ENCODE measurements at regions of chr4 and their contacts with region 1.

Region 1: DNA sequence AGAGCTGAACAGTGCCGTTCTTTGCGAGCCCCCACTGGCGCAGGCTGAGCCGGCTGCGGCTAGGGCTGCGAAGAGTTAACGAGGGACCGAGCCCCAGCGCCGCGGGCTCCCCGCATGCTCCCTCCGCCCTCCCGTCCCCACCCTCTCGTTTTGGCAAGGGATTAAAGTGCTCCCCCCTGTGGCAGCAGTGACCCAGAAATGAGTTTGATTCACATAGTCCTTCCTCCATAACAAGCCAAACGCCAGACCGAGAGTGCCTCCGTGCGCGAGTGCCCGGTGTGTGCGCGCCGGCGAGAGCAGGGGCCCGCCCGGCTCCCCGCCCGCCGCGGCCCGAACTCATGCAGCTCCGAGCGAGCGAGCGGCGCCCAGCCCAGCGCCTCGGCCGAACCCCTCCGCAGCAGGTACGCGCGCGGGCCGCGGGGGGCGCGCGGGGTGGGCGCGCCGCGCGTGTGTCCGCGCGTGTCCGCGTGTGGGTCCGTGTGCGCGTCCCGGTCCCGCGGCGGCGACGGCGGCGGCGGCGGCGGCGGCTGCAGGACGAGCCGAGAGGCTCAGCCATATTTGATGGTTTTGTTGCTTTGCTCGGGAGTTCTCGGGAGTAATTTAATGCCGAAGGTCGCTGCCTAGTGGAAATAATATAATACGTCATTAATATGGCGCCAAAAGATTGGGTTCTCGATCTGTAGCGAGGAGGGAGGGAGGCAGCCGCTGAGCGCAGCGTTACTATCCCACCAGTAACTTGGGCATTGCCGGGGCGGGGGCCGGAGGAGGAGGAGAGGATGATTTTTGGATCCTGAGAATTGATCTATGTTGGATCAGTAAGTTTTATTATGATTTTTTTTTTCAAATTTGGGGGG is at the start of gene JADE1:
- DNase-seq: peak; percentile 86
- H3K4me3 Mint-ChIP-seq: peak within 1 kb of the TSS; percentile 96
- H3K27ac Mint-ChIP-seq: peak within 1 kb of the TSS; percentile 99
- H3K4me1 Mint-ChIP-seq: peaks cover 10% of the 10 kb centered on the region
- H3K27me3 Mint-ChIP-seq: no peaks in the 10 kb centered on the region
- total RNA-seq, gene JADE1: 33.6 and 37.8 TPM in 2 replicates

Region 2: DNA sequence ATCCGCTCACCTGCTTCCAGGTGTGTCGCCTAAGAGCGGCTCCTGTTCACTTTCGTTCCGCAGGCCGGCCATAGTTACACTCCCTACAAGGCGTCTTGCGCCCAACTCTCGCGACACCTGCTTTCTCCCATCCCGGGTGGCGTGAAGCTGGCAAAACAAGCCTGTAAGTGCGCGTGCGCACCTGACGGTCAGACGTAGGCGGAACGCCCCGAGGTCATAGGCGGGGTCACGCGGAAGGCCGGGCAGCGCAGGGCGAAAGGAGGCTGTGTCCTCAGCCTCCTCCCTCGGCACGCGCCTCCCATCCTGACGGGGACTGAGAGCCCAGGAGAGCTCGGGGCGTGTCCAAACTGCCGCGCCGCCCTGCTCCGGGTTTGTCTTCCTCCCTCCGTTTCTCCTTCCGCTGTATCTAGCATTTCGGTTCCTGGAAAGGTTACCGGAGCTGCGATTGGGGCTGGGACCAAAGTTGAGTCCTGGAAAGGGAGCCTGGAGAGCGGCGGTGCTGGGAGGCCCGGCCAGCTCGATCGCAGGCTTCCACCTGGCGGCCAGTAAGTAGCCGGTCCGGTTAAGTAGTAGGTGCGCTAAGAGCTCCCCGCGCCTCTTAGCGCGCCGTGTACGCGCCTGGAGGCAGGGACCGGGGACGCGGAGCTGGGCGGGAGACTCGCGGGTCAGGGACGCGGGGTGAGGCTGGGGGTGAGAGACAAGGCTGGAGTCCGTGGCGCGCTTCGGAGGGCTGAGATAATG is 844.5 kb before region 1 on chr4 and contains the starts of genes ABHD18 and MFSD8:
- intact Hi-C with region 1: loop called (anchors 1 kb)
- DNase-seq: peak; percentile 100
- H3K4me3 Mint-ChIP-seq: peak within 1 kb of the TSS; percentile 95
- H3K27ac Mint-ChIP-seq: peak within 1 kb of the TSS; percentile 93
- H3K4me1 Mint-ChIP-seq: peaks cover 26% of the 10 kb centered on the region
- H3K27me3 Mint-ChIP-seq: no peaks in the 10 kb centered on the region
- total RNA-seq, gene ABHD18: 21.0 and 23.9 TPM in 2 replicates
- total RNA-seq, gene MFSD8: 18.7 and 20.2 TPM in 2 replicates

Region 3: GRCh38 chr4:128191115-128191781 is 618.5 kb before region 1 on chr4:
- intact Hi-C with region 1: loop called (anchors 1 kb)
- DNase-seq: peak; percentile 40
- H3K4me3 Mint-ChIP-seq: no peak overlapping the region
- H3K27ac Mint-ChIP-seq: no peak overlapping the region
- H3K4me1 Mint-ChIP-seq: peaks cover 14% of the 10 kb centered on the region
- H3K27me3 Mint-ChIP-seq: no peaks in the 10 kb centered on the region

Region 4: DNA sequence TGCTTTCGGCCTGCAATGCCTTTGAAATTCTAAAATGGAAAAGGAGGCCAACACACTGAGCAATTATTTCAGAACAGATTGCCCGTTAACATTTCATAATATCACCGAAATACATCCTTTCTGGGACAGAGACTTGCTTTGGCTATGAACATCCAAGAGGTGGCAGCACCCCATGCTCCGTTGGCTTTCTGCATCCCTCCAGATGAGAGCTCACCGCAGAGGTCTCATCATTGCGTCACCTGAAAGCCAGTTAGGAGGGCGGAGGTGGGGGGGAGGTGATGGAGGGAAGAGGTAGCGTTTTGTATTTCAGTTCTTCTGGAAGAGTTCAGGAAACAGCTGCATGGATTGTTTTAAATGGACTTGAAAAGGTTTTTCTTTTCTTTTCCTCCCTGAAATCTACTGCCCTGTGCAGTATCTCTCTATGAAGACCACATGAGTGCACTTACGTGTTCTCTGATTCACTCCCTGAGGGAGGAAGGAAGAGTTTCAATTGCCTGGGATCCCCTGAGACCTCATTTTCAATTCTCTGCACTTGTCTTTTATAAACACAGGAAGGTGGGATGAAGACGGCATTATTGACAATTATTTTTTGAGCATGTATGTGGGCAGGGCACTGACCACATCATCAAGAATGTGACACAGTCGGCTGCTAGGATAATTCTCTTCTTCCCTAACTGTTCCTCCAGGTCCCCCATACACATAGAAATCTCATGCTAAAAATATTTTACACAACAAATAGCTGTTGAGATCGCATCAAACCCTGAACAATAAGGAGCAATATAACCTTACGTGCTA is 355.2 kb before region 1 on chr4:
- intact Hi-C with region 1: loop called (anchors 1 kb)
- DNase-seq: peak; percentile 41
- H3K4me3 Mint-ChIP-seq: no peak overlapping the region
- H3K27ac Mint-ChIP-seq: no peak overlapping the region
- H3K4me1 Mint-ChIP-seq: peaks cover 10% of the 10 kb centered on the region
- H3K27me3 Mint-ChIP-seq: peaks cover 2% of the 10 kb centered on the region

Region 5: DNA sequence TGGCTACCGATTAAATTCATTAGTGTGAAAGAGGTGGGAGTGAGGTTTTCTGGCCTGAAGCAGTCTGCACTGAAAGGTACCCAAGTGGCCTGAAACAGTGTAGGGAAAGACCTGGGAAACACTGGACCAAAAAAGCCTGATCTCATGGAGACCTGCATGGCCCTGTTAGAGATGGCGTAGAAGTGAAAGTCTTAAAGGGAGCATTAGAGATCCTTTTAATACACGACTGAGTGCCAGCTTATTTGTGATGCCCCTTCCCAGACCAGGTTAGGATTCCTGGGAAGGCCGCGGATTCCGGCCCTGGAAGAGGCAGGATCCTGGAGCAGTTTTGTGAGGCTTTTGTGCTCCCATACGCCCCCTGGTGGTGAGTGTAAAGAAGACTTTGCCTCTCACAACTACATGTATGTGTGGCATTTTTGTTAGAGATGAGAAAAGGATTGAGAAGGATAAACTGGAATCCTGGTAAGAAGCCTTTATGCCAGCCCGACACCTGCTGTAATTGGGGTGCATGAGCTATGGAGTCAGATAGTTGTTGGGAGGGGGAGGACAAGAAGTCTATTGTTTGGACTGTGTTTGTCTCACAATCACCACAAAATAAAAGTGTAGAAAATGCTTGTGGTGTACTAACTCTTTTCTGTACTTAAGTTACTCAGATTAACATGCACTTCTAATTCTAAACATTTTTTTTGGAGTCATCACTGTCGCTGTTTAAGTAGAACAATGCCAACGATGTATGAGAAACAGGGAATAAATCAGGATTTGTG is 53.8 kb after region 1 on chr4:
- intact Hi-C with region 1: loop called (anchors 1 kb)
- DNase-seq: peak; percentile 41
- H3K4me3 Mint-ChIP-seq: no peak overlapping the region
- H3K27ac Mint-ChIP-seq: peak overlapping the region; percentile 67
- H3K4me1 Mint-ChIP-seq: peaks cover 46% of the 10 kb centered on the region
- H3K27me3 Mint-ChIP-seq: no peaks in the 10 kb centered on the region

Measured in activated T-helper 2 cell treated with anti-CD3 and anti-CD28 coated beads, Interferon-gamma antibody, Interleukin-2, Interleukin-4, amounts not matched to agents 10 μg/mL and 5 μg/mL and 100 μg/mL, durations not matched to agents 14 hours and 24 hours and 36 hours (primary cell).